Ascending aorta (tissue), 2 donors: ENCODE measurements at regions of chr5 and their contacts with region 1.

Region 1: GRCh38 chr5:90873033-90873517 is 314.5 kb downstream of the ADGRV1 start:
- DNase-seq: no peak
- H3K4me3 ChIP-seq: no peak overlapping the region
- H3K27ac ChIP-seq: no peak overlapping the region
- H3K4me1 ChIP-seq: peaks cover 0 to 4% of the 10 kb centered on the region in 2 donors
- H3K27me3 ChIP-seq: no peaks in the 10 kb centered on the region
- CTCF ChIP-seq: no peak

Region 2: DNA sequence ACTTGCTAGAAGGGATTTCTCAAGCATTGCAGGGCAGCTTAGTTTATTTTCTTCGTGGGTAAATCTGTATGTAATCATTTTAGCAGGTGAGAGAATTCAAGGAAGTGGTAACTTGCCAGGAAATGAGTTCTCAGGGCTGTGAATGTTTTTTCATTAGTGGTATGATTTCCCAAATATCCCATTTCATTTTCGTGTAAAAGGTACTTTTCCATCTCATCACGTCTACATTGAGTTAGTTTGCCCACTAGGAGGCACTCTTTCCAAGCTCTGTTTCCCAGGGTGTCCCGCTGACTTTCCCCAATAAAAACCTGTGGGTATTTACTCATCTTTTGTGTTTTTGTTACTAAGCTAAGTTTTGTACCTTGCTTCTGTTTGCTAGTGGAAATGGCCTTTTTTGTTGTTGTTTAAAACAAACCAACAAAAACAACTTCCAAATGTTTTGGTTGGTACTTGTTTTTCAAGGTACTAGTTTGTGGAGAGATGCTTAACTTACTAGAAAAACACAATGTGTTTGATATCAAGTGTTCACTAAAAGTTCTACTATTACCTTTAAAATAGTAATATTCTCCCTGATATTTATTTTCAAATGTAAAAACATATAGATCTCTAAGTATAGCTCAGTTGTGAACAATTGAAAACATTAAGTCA is 59.1 kb after region 1 on chr5:
- intact Hi-C with region 1: loop called (anchors 5 kb)
- DNase-seq: peak in 1 of 2 donors; percentile 69
- H3K4me3 ChIP-seq: no peak overlapping the region
- H3K27ac ChIP-seq: no peak overlapping the region
- H3K4me1 ChIP-seq: peaks cover 0 to 3% of the 10 kb centered on the region in 2 donors
- H3K27me3 ChIP-seq: no peaks in the 10 kb centered on the region
- CTCF ChIP-seq: peak; percentile 52 to 79 (median 57)

Region 3: GRCh38 chr5:91007251-91007650 is 134.2 kb after region 1 on chr5:
- intact Hi-C with region 1: no loop called
- DNase-seq: no peak
- H3K4me3 ChIP-seq: no peak overlapping the region
- H3K27ac ChIP-seq: no peak overlapping the region
- H3K4me1 ChIP-seq: no peaks in the 10 kb centered on the region
- H3K27me3 ChIP-seq: no peaks in the 10 kb centered on the region
- CTCF ChIP-seq: no peak

Region 4: DNA sequence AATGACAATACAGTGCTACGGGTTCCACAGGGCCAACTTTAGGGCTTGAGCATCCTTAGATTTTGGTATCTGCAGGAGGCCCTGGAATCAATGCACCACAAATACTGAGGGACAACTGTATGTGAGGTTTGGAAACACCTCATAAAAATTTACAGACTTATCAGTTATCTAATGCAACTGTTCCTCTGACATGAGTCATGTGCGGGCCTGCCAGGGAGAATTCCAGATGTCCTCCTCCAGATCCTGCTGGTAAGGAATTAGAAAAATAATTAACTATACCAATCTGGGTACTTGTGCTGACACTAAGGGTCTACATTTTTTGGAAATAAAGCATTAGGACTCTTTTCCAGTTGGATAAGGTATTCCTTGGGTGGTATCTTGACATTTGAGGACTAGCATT is 176.7 kb after region 1 on chr5:
- intact Hi-C with region 1: no loop called
- DNase-seq: no peak
- H3K4me3 ChIP-seq: no peak overlapping the region
- H3K27ac ChIP-seq: no peak overlapping the region
- H3K4me1 ChIP-seq: no peaks in the 10 kb centered on the region
- H3K27me3 ChIP-seq: no peaks in the 10 kb centered on the region
- CTCF ChIP-seq: no peak